CD8-positive, alpha-beta T cell (primary cell): ENCODE measurements at regions of chr22 and their contacts with region 1.

Region 1: DNA sequence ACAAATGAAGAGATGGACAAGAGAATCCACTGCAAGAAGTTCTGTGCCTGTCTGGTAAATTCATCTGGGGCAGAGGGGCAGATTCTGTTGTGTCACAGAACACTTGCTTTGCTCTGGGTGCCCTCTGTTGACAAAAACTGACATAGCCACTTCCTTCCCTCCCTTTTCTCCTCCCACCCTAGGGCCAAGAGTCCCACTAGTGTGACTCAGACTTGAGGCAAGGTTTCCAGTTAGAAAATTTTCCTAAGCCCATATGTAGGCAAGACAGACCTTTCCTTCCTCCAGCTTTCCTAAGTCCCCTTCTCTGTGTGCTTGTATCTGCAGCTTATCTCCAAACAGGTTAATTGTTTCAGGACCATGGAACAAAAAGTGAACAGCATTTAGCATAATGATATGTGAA is 106.8 kb downstream of the RBFOX2 start:
- DNase-seq: peak in 7 of 9 experiments; percentile 7 to 58 (median 24)
- ATAC-seq: peak; percentile 48
- H3K4me3 ChIP-seq: no peak overlapping the region
- H3K4me3 Mint-ChIP-seq: no peak overlapping the region
- H3K27ac ChIP-seq: no peak overlapping the region
- H3K27ac Mint-ChIP-seq: no peak overlapping the region
- H3K4me1 ChIP-seq: no peaks in the 10 kb centered on the region
- H3K4me1 Mint-ChIP-seq: no peaks in the 10 kb centered on the region
- H3K27me3 ChIP-seq: no peaks in the 10 kb centered on the region
- H3K27me3 Mint-ChIP-seq: peaks cover 2% of the 10 kb centered on the region
- CTCF ChIP-seq: peak; percentile 43

Region 2: DNA sequence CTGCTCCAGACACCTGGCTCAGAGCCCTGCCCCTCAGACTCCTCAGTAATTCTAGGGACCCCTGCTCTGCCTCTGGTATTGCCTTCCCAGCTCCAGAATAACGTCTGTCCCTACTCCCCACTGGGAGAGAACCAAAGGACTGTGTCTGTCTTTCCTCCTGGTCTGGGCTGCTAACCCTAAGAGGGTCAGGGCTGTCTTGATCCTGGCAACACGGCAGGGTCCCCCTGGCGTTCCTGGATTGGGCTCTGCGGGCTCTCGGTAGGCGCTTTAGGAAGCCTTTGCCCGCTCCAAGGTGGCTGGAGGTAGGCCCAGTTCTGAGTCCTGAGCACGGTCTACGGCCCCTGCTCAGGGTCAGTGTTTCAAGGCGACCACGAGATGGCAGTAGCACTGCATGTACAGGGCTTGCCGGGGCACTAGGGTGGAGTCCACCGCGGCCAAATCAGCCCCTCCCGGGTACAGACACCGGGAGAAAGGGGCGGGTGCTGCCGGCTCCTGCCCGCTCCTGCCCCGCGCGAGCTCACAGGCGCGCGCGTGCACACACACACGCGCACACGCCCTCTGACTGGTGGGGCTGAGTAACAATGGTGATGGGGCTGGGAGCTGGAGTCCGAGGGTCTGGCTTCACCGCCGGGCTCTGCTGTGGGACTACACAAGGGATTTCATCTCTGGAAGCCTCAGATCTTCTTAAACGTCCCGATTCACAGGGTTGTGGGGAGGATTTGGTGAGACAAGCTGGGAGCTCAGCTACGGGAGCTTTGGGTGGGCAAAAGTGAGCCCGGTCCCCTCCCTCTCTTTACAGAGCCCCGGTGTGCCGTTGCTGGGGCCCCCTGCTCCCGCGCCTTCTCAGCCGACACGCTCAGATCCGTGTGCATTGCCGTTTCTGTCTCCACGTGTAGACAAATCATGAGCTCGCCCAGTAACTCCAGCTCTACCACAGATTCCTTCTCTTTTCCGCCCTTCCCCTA is 571.0 kb before region 1 on chr22:
- CTCF ChIA-PET with region 1: interaction called, 6 read pairs
- POLR2A ChIA-PET with region 1: no interaction called
- intact Hi-C with region 1: loop called in 1 of 2 experiments (anchors 10 kb)
- DNase-seq: peak; percentile 67 to 92 (median 83)
- ATAC-seq: peak; percentile 85
- H3K4me3 ChIP-seq: peak overlapping the region; percentile 36 to 46
- H3K4me3 Mint-ChIP-seq: peak overlapping the region; percentile 79
- H3K27ac ChIP-seq: no peak overlapping the region
- H3K27ac Mint-ChIP-seq: no peak overlapping the region
- H3K4me1 ChIP-seq: peaks cover 14% of the 10 kb centered on the region
- H3K4me1 Mint-ChIP-seq: peaks cover 20% of the 10 kb centered on the region
- H3K27me3 ChIP-seq: peaks cover 0 to 5% of the 10 kb centered on the region in 2 experiments
- H3K27me3 Mint-ChIP-seq: peaks cover 11% of the 10 kb centered on the region
- CTCF ChIP-seq: peak; percentile 85

Region 3: DNA sequence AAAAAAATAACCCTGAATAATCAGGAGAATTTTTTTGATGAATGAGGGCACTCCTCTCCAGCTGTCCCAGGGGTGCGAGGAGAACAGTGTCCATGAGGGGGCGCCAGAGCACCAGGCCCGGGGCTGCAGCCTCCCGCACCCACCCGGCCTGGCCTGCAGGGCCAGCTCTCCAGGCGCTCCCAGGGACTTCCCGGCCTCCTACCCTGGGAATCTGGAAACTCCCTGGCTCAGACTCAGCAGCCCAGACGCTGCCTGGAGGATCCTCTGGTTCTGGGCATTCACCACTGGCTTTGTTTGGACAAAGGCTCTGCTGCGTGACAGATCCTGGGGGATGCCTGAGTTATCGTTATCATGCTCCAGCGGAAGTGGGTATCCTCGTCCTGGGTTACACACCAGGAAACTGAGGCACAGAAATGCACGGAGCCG is 490.9 kb before region 1 on chr22:
- CTCF ChIA-PET with region 1: interaction called, 3 read pairs
- POLR2A ChIA-PET with region 1: no interaction called
- intact Hi-C with region 1: loop called in 1 of 2 experiments (anchors 10 kb)
- DNase-seq: peak; percentile 49 to 76 (median 66)
- ATAC-seq: peak; percentile 84
- H3K4me3 ChIP-seq: no peak overlapping the region
- H3K4me3 Mint-ChIP-seq: no peak overlapping the region
- H3K27ac ChIP-seq: no peak overlapping the region
- H3K27ac Mint-ChIP-seq: no peak overlapping the region
- H3K4me1 ChIP-seq: no peaks in the 10 kb centered on the region
- H3K4me1 Mint-ChIP-seq: peaks cover 2% of the 10 kb centered on the region
- H3K27me3 ChIP-seq: no peaks in the 10 kb centered on the region
- H3K27me3 Mint-ChIP-seq: no peaks in the 10 kb centered on the region
- CTCF ChIP-seq: peak; percentile 83

Region 4: GRCh38 chr22:35894937-35895708 is 26.7 kb before region 1 on chr22:
- CTCF ChIA-PET with region 1: no interaction called
- POLR2A ChIA-PET with region 1: no interaction called
- intact Hi-C with region 1: loop called in 1 of 2 experiments (anchors 1 kb)
- DNase-seq: peak in 2 of 9 experiments; percentile 41 to 46
- ATAC-seq: peak; percentile 34
- H3K4me3 ChIP-seq: no peak overlapping the region
- H3K4me3 Mint-ChIP-seq: no peak overlapping the region
- H3K27ac ChIP-seq: no peak overlapping the region
- H3K27ac Mint-ChIP-seq: no peak overlapping the region
- H3K4me1 ChIP-seq: peaks cover under 1% of the 10 kb centered on the region
- H3K4me1 Mint-ChIP-seq: peaks cover under 1% of the 10 kb centered on the region
- H3K27me3 ChIP-seq: no peaks in the 10 kb centered on the region
- H3K27me3 Mint-ChIP-seq: peaks cover 19% of the 10 kb centered on the region
- CTCF ChIP-seq: no peak